ENCODE measurements at regions of chr11 and their contacts with region 1.

Region 1: DNA sequence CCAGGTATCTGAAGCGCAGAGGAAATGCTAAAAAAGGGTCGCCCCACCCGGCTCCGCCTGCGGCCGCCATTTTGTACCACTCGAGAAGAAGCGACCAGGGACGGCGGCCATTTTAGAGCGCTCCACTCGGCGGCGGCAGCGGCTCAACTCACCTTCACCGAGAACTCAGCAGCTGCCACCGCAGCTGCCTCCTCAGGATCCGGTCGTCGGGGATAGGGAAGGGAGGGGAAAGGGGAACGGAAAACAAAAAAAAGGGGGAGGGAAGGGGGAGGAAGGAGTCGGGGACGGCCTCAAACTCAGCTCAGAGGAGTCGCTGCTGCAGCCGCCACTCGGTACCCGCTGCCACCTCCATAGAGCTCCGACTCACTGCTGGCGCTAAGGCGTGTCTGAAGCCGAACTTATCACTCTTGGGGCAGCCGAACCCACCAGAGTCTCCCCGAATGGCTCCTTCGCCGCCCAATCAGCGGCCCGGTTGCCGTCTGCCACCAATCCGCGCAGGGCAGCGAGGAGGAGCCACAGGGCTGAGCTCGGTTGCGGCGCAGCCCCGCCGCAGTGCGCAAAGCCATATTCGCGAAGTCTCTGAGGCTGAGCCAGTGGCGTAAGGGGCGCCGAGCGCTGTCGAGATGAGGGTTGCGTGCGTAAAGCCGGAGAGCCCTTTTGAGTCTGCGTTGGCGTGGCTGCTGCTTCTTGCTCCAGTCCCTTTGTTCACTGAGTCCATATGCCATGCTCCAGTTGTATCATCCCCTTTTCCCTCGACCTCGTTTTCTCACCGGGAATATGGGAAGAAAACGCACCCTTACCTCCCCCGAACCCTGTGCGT is at the start of gene EIF4G2:
- H3K4me3 ChIP-seq: peak within 1 kb of the TSS; percentile 99
- H3K27ac ChIP-seq: peak within 1 kb of the TSS; percentile 90
- H3K4me1 ChIP-seq: no peaks in the 10 kb centered on the region
- CTCF ChIP-seq: peak; percentile 13; the same call in 1 of the 2 replicates

Region 2: GRCh38 chr11:10750838-10751580 is 57.8 kb before region 1 on chr11 and contains the start of gene CTR9:
- CTCF ChIA-PET with region 1: interaction called, 3 read pairs
- POLR2A ChIA-PET with region 1: interaction called, 35 read pairs
- H3K4me3 ChIP-seq: peak within 1 kb of the TSS; percentile 70
- H3K27ac ChIP-seq: peak within 1 kb of the TSS; percentile 73
- H3K4me1 ChIP-seq: no peaks in the 10 kb centered on the region
- CTCF ChIP-seq: peak; percentile 56

Region 3: GRCh38 chr11:10824888-10825287 is 16.1 kb after region 1 on chr11:
- CTCF ChIA-PET with region 1: no interaction called
- POLR2A ChIA-PET with region 1: interaction called, 42 read pairs
- H3K4me3 ChIP-seq: no peak overlapping the region
- H3K27ac ChIP-seq: no peak overlapping the region
- H3K4me1 ChIP-seq: no peaks in the 10 kb centered on the region
- CTCF ChIP-seq: no peak

Region 4: DNA sequence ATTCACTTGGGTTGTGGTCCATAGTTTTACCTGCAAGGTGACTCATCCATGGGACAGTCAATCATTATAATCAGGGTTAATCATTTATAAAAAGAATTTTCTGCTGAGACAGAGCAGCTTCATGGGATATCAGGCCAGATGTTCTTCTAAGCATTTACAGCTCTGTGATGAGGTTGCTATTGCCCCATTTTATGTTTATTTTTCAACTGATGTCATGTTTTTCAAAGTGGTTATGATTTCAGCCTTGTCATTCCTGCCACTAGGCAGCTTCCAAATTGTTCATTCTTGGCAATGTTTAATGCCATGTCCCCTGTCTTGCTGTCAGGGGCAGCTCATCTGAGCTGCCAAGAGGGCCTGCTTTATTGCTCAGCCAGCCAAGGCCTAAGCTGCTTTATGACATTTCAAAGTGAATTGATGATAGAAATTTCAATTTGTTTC is 85.0 kb after region 1 on chr11:
- CTCF ChIA-PET with region 1: no interaction called
- POLR2A ChIA-PET with region 1: interaction called, 62 read pairs
- H3K4me3 ChIP-seq: no peak overlapping the region
- H3K27ac ChIP-seq: no peak overlapping the region
- H3K4me1 ChIP-seq: no peaks in the 10 kb centered on the region
- CTCF ChIP-seq: no peak

Region 5: GRCh38 chr11:10933455-10934292 is 124.9 kb after region 1 on chr11:
- CTCF ChIA-PET with region 1: interaction called, 6 read pairs
- POLR2A ChIA-PET with region 1: interaction called, 71 read pairs
- H3K4me3 ChIP-seq: peak overlapping the region; percentile 43
- H3K27ac ChIP-seq: no peak overlapping the region; the same call in 1 of the 2 replicates
- H3K4me1 ChIP-seq: no peaks in the 10 kb centered on the region
- CTCF ChIP-seq: peak; percentile 79

Region 6: DNA sequence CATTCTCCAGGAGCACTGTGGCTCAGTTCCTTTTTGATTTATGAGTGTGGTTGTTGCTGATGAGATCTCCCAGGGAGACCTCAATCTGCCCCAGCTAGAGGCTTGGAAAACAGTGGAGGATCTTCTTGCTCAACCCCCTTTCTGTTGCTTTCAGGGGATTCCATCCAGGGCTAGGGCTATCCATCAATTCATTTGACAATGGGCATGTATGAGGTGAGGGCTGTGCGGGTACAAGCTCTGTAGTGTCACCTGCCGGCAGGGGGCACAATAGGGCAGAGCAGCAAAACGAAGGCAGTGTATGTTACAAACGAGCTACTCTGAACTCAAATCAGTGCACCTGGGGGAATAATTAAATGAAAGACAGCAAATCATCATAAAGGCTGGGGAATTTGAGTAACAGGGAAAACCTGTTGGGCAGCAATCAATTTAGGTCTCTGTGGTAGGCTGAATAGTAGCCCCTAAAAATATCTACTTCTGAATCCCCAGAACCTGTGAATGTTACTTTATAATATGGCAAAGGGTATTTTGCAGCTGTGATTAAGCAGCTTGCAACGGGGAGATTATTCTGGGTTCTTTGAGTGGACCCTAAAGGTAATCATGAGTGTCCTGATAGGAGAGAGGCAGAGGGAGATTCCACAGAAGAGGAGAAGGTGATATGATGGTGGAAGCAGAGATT is 219.4 kb after region 1 on chr11:
- CTCF ChIA-PET with region 1: no interaction called
- POLR2A ChIA-PET with region 1: interaction called, 11 read pairs
- H3K4me3 ChIP-seq: no peak overlapping the region
- H3K27ac ChIP-seq: no peak overlapping the region
- H3K4me1 ChIP-seq: no peaks in the 10 kb centered on the region
- CTCF ChIP-seq: no peak

Measured in HEK293 (cell line).